CD4-positive, alpha-beta T cell (primary cell): ENCODE measurements at regions of chrX and their contacts with region 1.

Region 1: GRCh38 chrX:101415180-101416145 is 7.4 kb downstream of the HNRNPH2 start:
- DNase-seq: peak in 5 of 14 experiments; percentile 11 to 84 (median 76)
- ATAC-seq: peak; percentile 81
- H3K4me3 ChIP-seq: no peak overlapping the region
- H3K4me3 Mint-ChIP-seq: peak overlapping the region; percentile 84
- H3K27ac ChIP-seq: peak overlapping the region; percentile 21 to 55
- H3K27ac Mint-ChIP-seq: peak overlapping the region; percentile 80
- H3K4me1 ChIP-seq: peaks cover 36% of the 10 kb centered on the region
- H3K4me1 Mint-ChIP-seq: peaks cover 65% of the 10 kb centered on the region
- H3K27me3 ChIP-seq: no peaks in the 10 kb centered on the region
- H3K27me3 Mint-ChIP-seq: no peaks in the 10 kb centered on the region
- CTCF ChIP-seq: peak; percentile 64

Region 2: DNA sequence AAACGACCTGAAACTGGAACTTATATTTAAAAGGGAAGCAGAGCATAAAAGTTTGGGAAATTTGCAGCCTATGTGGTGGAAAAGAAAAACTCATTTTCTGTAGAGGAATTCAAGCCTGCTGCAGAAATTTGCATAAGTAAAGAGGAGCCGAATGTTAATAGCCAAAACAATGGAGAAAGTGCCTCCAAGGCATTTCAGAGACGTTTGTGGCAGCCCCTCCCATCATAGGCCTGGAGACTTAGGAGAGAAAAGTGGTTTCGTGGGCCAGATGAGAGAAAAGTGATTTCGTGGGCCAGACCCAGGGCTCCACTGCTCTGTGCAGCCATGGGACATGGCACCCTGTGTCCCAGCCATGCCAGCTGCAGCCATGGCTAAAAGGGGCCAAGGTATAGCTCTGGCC is 1367.3 kb before region 1 on chrX:
- CTCF ChIA-PET with region 1: no interaction called
- POLR2A ChIA-PET with region 1: no interaction called
- intact Hi-C with region 1: no loop called
- DNase-seq: no peak
- ATAC-seq: no peak
- H3K4me3 ChIP-seq: no peak overlapping the region
- H3K4me3 Mint-ChIP-seq: no peak overlapping the region
- H3K27ac ChIP-seq: no peak overlapping the region
- H3K27ac Mint-ChIP-seq: no peak overlapping the region
- H3K4me1 ChIP-seq: no peaks in the 10 kb centered on the region
- H3K4me1 Mint-ChIP-seq: no peaks in the 10 kb centered on the region
- H3K27me3 ChIP-seq: no peaks in the 10 kb centered on the region
- H3K27me3 Mint-ChIP-seq: no peaks in the 10 kb centered on the region
- CTCF ChIP-seq: no peak

Region 3: DNA sequence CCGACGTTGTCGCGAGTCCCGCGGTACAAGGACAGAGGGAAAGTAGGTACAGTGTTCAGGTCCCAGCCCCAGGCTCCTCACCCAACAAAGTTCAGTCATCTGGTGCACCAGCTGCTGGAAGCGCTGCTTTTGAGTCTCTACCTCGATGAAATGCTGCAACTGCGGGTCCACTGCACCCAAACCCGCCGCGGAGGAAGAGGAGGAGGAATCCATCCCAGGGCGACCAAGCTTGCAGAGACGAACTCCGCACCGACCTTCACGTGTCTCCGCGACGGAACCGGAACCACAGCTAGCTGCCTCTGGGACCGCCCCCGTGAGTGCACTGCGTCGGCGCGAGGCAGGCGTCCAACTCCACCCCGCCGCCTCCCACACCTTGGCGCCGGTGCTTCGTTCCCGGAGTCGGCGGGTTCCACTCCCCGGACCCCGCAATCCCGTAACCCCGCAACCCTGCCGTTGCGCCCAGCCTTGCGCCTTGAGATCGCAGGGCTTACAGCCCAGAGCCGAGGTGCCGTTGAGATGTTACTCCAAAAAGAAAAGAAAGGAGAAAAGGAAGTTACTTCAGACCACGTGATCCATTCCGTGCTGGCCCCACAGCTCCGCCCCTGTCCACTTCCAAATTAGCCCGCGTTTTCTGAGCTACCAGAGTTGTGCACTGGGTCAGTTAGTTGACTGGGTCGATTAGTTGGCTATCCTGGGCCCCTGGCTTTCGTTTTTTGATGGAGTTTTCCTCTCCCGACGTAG is 66.8 kb before region 1 on chrX and contains the start of gene TIMM8A:
- CTCF ChIA-PET with region 1: no interaction called
- POLR2A ChIA-PET with region 1: no interaction called
- intact Hi-C with region 1: loop called in 1 of 2 experiments (anchors 5 kb)
- DNase-seq: peak; percentile 48 to 87 (median 68)
- ATAC-seq: peak; percentile 99
- H3K4me3 ChIP-seq: peak within 1 kb of the TSS; percentile 86
- H3K4me3 Mint-ChIP-seq: peak within 1 kb of the TSS; percentile 92
- H3K27ac ChIP-seq: peak within 1 kb of the TSS; percentile 67 to 88
- H3K27ac Mint-ChIP-seq: peak within 1 kb of the TSS; percentile 88
- H3K4me1 ChIP-seq: peaks cover 15% of the 10 kb centered on the region
- H3K4me1 Mint-ChIP-seq: peaks cover 19% of the 10 kb centered on the region
- H3K27me3 ChIP-seq: no peaks in the 10 kb centered on the region
- H3K27me3 Mint-ChIP-seq: no peaks in the 10 kb centered on the region
- CTCF ChIP-seq: no peak
- total RNA-seq, gene TIMM8A: 5.0 to 6.4 TPM

Region 4: DNA sequence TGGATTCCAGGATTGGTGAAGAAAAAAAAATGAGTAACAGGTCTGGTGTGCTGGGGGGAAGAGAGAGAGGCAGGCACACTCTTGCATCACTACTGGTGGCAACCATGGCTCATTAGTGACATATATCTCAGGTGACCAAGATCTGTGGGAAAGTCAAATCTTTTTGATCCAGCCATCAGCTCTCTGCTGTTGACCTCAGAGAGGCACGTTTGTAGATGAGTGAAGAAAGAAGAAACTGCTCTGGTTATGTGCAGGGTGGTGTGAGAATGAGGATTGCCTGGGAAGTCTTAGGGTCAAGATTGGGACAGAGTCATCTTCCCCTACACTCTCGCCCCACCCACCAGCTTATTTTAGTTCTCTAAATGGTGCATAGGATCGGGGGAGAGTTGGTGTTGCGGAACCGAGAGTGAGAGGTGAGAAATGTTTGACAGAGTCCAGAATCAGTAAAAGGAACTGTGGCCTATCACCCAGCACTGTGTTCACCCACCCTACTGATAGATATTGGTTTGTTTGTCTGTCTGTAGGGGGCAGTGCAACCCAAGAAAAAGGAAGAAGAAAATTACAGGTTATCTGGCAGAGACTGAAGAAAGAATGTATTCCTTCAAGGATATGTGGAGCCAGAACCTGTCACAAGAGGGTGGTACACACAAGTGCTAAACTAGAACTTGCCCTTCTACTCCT is 180.4 kb after region 1 on chrX:
- CTCF ChIA-PET with region 1: no interaction called
- POLR2A ChIA-PET with region 1: no interaction called
- intact Hi-C with region 1: loop called (anchors 5 kb)
- DNase-seq: peak in 7 of 14 experiments; percentile 4 to 77 (median 53)
- ATAC-seq: peak; percentile 74
- H3K4me3 ChIP-seq: no peak overlapping the region
- H3K4me3 Mint-ChIP-seq: no peak overlapping the region
- H3K27ac ChIP-seq: no peak overlapping the region
- H3K27ac Mint-ChIP-seq: no peak overlapping the region
- H3K4me1 ChIP-seq: no peaks in the 10 kb centered on the region
- H3K4me1 Mint-ChIP-seq: no peaks in the 10 kb centered on the region
- H3K27me3 ChIP-seq: peaks cover 2 to 10% of the 10 kb centered on the region in 2 experiments
- H3K27me3 Mint-ChIP-seq: peaks cover 28% of the 10 kb centered on the region
- CTCF ChIP-seq: peak; percentile 63

Region 5: GRCh38 chrX:101764538-101764937 is 349.1 kb after region 1 on chrX:
- CTCF ChIA-PET with region 1: no interaction called
- POLR2A ChIA-PET with region 1: no interaction called
- intact Hi-C with region 1: loop called (anchors 2 to 5 kb)
- DNase-seq: no peak
- ATAC-seq: no peak
- H3K4me3 ChIP-seq: no peak overlapping the region
- H3K4me3 Mint-ChIP-seq: no peak overlapping the region
- H3K27ac ChIP-seq: no peak overlapping the region
- H3K27ac Mint-ChIP-seq: no peak overlapping the region
- H3K4me1 ChIP-seq: no peaks in the 10 kb centered on the region
- H3K4me1 Mint-ChIP-seq: no peaks in the 10 kb centered on the region
- H3K27me3 ChIP-seq: no peaks in the 10 kb centered on the region
- H3K27me3 Mint-ChIP-seq: no peaks in the 10 kb centered on the region
- CTCF ChIP-seq: no peak

Region 6: DNA sequence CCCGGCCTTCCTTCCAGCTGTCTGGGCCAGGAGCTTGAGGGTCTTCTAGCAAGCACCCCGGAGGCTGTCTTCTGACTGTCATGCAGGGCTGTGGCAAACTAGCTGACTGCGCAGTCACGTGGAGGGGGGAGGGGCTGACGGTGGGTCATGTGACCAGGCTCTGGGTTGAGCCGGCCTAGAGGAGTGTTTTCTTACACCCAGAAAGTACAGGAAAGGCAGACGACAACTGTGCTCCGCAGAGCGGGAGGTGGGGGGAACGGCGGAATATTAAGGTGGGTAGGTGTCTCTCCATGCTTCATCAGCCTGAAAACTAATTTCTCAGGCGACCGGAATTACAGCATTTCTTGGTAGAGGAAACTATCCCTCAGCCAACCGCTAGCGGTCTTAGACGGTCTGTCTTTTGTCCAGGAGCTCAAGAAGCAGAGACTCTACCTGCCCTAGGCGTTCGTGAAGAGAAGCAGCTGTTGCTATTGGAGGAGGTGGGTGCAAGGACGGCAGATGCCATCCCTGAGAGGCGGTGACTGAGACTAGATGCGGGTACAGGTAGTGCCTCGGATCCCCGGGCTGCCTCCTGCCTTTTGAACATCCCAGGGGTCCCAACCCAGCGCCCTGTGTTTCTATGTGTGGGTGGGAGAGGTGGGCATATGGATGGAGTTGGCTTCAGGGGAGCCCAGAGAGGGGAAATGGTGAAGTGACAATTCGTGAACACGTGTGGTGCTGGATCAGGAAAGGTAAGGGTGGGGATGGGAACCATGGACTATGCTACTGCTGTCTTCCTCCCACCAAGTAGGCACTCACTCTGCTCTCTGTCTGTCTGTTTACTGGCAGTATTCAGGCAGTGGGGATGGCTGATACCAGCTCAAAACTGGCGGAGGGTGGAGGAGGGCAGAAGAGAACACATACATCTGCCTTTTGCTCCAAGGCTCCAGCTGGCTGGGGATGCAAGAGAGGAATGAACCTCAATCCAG is 1244.6 kb after region 1 on chrX:
- CTCF ChIA-PET with region 1: no interaction called
- POLR2A ChIA-PET with region 1: no interaction called
- intact Hi-C with region 1: loop called in 1 of 2 experiments (anchors 10 kb)
- DNase-seq: peak; percentile 64 to 88 (median 80)
- ATAC-seq: peak; percentile 96
- H3K4me3 ChIP-seq: peak overlapping the region; percentile 59
- H3K4me3 Mint-ChIP-seq: peak overlapping the region; percentile 92
- H3K27ac ChIP-seq: peak overlapping the region in 1 of 2 donors; percentile 15
- H3K27ac Mint-ChIP-seq: peak overlapping the region; percentile 89
- H3K4me1 ChIP-seq: peaks cover 11% of the 10 kb centered on the region
- H3K4me1 Mint-ChIP-seq: peaks cover 50% of the 10 kb centered on the region
- H3K27me3 ChIP-seq: no peaks in the 10 kb centered on the region
- H3K27me3 Mint-ChIP-seq: no peaks in the 10 kb centered on the region
- CTCF ChIP-seq: no peak